ENCODE measurements at regions of chr14 and their contacts with region 1.

Region 1: GRCh38 chr14:103910262-103910935 is 17.9 kb upstream of the TDRD9 start:
- DNase-seq: peak; percentile 59 to 86 (median 75)
- ATAC-seq: peak; percentile 76
- H3K4me3 ChIP-seq: peak overlapping the region; percentile 30 to 51
- H3K4me3 Mint-ChIP-seq: peak overlapping the region; percentile 73
- H3K27ac ChIP-seq: peak overlapping the region; percentile 21 to 45
- H3K27ac Mint-ChIP-seq: peak overlapping the region; percentile 89
- H3K4me1 ChIP-seq: peaks cover 28% of the 10 kb centered on the region
- H3K4me1 Mint-ChIP-seq: peaks cover 26% of the 10 kb centered on the region
- H3K27me3 ChIP-seq: no peaks in the 10 kb centered on the region
- H3K27me3 Mint-ChIP-seq: peaks cover 2% of the 10 kb centered on the region
- CTCF ChIP-seq: peak; percentile 79

Region 2: GRCh38 chr14:103463149-103463548 is 447.2 kb before region 1 on chr14:
- CTCF ChIA-PET with region 1: no interaction called
- POLR2A ChIA-PET with region 1: no interaction called
- intact Hi-C with region 1: no loop called
- DNase-seq: no peak
- ATAC-seq: no peak
- H3K4me3 ChIP-seq: no peak overlapping the region
- H3K4me3 Mint-ChIP-seq: no peak overlapping the region
- H3K27ac ChIP-seq: no peak overlapping the region
- H3K27ac Mint-ChIP-seq: peak overlapping the region; percentile 24
- H3K4me1 ChIP-seq: peaks cover 14% of the 10 kb centered on the region
- H3K4me1 Mint-ChIP-seq: peaks cover 16% of the 10 kb centered on the region
- H3K27me3 ChIP-seq: no peaks in the 10 kb centered on the region
- H3K27me3 Mint-ChIP-seq: no peaks in the 10 kb centered on the region
- CTCF ChIP-seq: no peak

Region 3: GRCh38 chr14:103576371-103577024 is 333.9 kb before region 1 on chr14:
- CTCF ChIA-PET with region 1: no interaction called
- POLR2A ChIA-PET with region 1: no interaction called
- intact Hi-C with region 1: loop called in 1 of 2 experiments (anchors 5 kb)
- DNase-seq: no peak
- ATAC-seq: no peak
- H3K4me3 ChIP-seq: no peak overlapping the region
- H3K4me3 Mint-ChIP-seq: no peak overlapping the region
- H3K27ac ChIP-seq: no peak overlapping the region
- H3K27ac Mint-ChIP-seq: no peak overlapping the region
- H3K4me1 ChIP-seq: no peaks in the 10 kb centered on the region
- H3K4me1 Mint-ChIP-seq: no peaks in the 10 kb centered on the region
- H3K27me3 ChIP-seq: no peaks in the 10 kb centered on the region
- H3K27me3 Mint-ChIP-seq: no peaks in the 10 kb centered on the region
- CTCF ChIP-seq: no peak

Region 4: GRCh38 chr14:103819503-103820307 is 90.7 kb before region 1 on chr14:
- CTCF ChIA-PET with region 1: interaction called, 11 read pairs
- POLR2A ChIA-PET with region 1: no interaction called
- intact Hi-C with region 1: no loop called
- DNase-seq: no peak
- ATAC-seq: no peak
- H3K4me3 ChIP-seq: no peak overlapping the region
- H3K4me3 Mint-ChIP-seq: no peak overlapping the region
- H3K27ac ChIP-seq: no peak overlapping the region
- H3K27ac Mint-ChIP-seq: peak overlapping the region; percentile 74
- H3K4me1 ChIP-seq: peaks cover 27% of the 10 kb centered on the region
- H3K4me1 Mint-ChIP-seq: peaks cover 49% of the 10 kb centered on the region
- H3K27me3 ChIP-seq: no peaks in the 10 kb centered on the region
- H3K27me3 Mint-ChIP-seq: no peaks in the 10 kb centered on the region
- CTCF ChIP-seq: no peak

Region 5: DNA sequence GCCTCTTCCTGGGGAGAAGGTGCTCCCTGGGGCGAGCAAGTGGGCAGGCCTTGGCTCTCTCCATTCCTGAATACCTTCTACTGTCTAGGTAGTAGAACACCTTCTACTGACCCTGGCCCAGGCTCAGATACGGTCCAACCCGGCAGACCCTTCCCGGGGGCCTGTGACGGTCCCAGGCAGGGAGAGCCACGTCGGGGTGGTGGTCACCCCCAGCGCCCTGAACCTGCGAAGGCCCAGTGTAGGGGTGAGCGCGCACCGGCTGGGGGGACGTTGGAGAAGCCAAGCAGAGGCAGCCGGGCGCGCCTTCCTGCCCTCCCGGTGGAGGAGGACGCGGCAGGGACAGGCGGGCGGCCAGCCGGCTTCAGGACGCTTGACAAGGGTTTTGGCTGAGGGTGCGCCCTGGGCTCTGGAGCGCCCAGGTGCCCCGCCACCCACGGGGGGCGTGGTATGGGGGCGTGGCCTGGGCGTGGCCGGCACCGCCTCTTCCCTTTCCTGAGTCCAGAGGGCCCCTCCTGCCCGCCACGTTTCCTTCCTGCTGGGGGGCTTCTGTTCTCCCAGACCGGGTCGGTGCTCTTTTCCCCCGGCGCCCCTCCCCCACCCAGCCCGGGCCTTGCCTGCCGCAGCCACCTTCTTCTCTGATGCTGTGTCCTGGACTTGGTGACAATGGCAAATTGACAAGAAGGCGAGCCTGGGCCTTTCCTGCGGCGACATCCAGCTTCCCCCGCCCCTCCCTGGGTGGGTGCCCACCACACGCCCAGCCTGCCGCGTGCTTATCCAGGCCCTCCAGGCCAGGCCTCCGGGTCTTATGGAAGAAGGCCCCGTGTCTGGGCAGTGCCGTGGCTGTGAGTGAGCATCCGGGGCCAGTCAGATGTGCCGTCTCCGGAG is 38.6 kb before region 1 on chr14:
- CTCF ChIA-PET with region 1: interaction called, 7 read pairs
- POLR2A ChIA-PET with region 1: no interaction called
- intact Hi-C with region 1: loop called in 1 of 2 experiments (anchors 5 kb)
- DNase-seq: peak; percentile 42 to 86 (median 77)
- ATAC-seq: peak; percentile 83
- H3K4me3 ChIP-seq: peak overlapping the region; percentile 46 to 68
- H3K4me3 Mint-ChIP-seq: peak overlapping the region; percentile 92
- H3K27ac ChIP-seq: peak overlapping the region; percentile 23 to 61
- H3K27ac Mint-ChIP-seq: peak overlapping the region; percentile 92
- H3K4me1 ChIP-seq: peaks cover 26% of the 10 kb centered on the region
- H3K4me1 Mint-ChIP-seq: peaks cover 19% of the 10 kb centered on the region
- H3K27me3 ChIP-seq: no peaks in the 10 kb centered on the region
- H3K27me3 Mint-ChIP-seq: no peaks in the 10 kb centered on the region
- CTCF ChIP-seq: no peak

Region 6: GRCh38 chr14:103889313-103890051 is 20.9 kb before region 1 on chr14:
- CTCF ChIA-PET with region 1: interaction called, 11 read pairs
- POLR2A ChIA-PET with region 1: no interaction called
- intact Hi-C with region 1: no loop called
- DNase-seq: no peak
- ATAC-seq: no peak
- H3K4me3 ChIP-seq: no peak overlapping the region
- H3K4me3 Mint-ChIP-seq: no peak overlapping the region
- H3K27ac ChIP-seq: no peak overlapping the region
- H3K27ac Mint-ChIP-seq: no peak overlapping the region
- H3K4me1 ChIP-seq: no peaks in the 10 kb centered on the region
- H3K4me1 Mint-ChIP-seq: no peaks in the 10 kb centered on the region
- H3K27me3 ChIP-seq: no peaks in the 10 kb centered on the region
- H3K27me3 Mint-ChIP-seq: no peaks in the 10 kb centered on the region
- CTCF ChIP-seq: no peak

Region 7: DNA sequence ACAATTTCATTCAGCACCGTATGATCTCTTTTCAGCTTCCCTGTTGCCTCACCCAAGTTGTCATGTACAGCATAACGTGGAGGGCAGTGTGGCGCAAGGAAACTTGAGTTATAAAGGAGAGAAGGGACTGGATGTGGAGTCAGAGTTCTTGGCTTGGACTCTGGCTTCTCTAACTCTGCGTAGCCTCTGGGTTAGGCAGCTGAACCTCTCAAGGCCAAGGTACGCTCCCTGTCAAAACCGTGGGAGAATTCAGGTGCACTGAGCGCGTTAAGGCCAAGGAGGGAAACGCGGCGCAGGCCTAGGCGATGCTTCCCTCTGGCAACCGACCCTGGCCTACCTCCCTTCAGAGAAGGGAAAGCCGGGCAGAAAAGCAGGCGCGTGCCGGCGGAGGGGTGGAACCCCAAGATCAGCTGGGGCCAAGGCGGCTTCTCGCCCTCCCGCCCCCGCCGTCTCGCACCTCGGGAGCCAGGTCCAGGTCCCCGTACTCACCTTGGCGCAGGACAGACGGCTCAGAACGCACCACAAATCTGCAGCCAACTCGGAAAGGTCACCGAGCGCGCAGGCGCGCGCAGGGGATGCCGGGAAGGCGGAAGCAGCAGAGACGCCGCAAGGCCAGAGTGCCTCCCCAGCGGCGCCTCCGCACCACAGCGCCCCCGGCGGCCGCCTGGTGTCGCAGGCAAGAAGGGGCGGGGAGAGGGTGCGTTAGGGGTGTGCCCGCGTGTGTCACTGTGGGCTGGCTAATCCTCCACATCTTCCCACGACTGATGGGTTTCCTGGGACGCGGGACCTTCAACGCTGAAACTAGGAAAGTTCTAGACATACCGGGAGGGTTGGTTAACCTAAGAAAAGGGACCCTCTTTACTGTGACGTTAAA is 10.8 kb after region 1 on chr14:
- CTCF ChIA-PET with region 1: interaction called, 50 read pairs
- POLR2A ChIA-PET with region 1: interaction called, 3 read pairs
- intact Hi-C with region 1: loop called in 1 of 2 experiments (anchors 1 kb)
- DNase-seq: peak; percentile 90 to 97 (median 94)
- ATAC-seq: peak; percentile 99
- H3K4me3 ChIP-seq: peak overlapping the region; percentile 88 to 91
- H3K4me3 Mint-ChIP-seq: peak overlapping the region; percentile 90
- H3K27ac ChIP-seq: peak overlapping the region; percentile 67 to 71
- H3K27ac Mint-ChIP-seq: peak overlapping the region; percentile 89
- H3K4me1 ChIP-seq: peaks cover 20% of the 10 kb centered on the region
- H3K4me1 Mint-ChIP-seq: peaks cover 24% of the 10 kb centered on the region
- H3K27me3 ChIP-seq: peaks cover 0 to 8% of the 10 kb centered on the region in 2 experiments
- H3K27me3 Mint-ChIP-seq: peaks cover 7% of the 10 kb centered on the region
- CTCF ChIP-seq: peak; percentile 90